Ascending aorta (tissue), 2 donors: ENCODE measurements at regions of chr17 and their contacts with region 1.

Region 1: GRCh38 chr17:39952680-39953470 is 9.9 kb upstream of the GSDMA start:
- DNase-seq: peak; percentile 93 to 99
- H3K4me3 ChIP-seq: peak overlapping the region; percentile 45 to 58
- H3K27ac ChIP-seq: peak overlapping the region; percentile 46 to 53
- H3K4me1 ChIP-seq: peaks cover 2 to 10% of the 10 kb centered on the region in 2 donors
- H3K27me3 ChIP-seq: no peaks in the 10 kb centered on the region
- CTCF ChIP-seq: no peak

Region 2: DNA sequence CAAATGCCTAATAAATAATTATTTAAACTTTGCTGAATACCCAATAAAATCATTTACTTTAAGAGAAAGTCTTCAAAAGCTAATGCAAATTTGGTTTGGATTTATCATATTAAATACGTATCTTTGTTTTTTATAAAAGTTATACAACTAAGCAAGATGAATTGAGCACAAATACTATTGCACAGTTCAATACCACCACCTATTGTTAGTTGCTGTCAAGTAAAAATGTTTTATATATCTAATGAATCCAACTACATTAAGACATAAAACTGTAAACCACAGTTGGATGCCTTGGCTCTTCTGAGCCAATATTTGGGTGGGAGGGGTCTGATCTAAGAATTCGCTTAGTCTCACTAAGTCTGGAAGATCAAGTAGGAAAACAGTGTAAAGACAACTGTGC is 559.1 kb before region 1 on chr17:
- intact Hi-C with region 1: no loop called
- DNase-seq: no peak
- H3K4me3 ChIP-seq: peak overlapping the region in 1 of 2 donors; percentile 38
- H3K27ac ChIP-seq: peak overlapping the region; percentile 18 to 68
- H3K4me1 ChIP-seq: peaks cover 0 to 19% of the 10 kb centered on the region in 2 donors
- H3K27me3 ChIP-seq: no peaks in the 10 kb centered on the region
- CTCF ChIP-seq: peak; percentile 24 to 44 (median 28)

Region 3: DNA sequence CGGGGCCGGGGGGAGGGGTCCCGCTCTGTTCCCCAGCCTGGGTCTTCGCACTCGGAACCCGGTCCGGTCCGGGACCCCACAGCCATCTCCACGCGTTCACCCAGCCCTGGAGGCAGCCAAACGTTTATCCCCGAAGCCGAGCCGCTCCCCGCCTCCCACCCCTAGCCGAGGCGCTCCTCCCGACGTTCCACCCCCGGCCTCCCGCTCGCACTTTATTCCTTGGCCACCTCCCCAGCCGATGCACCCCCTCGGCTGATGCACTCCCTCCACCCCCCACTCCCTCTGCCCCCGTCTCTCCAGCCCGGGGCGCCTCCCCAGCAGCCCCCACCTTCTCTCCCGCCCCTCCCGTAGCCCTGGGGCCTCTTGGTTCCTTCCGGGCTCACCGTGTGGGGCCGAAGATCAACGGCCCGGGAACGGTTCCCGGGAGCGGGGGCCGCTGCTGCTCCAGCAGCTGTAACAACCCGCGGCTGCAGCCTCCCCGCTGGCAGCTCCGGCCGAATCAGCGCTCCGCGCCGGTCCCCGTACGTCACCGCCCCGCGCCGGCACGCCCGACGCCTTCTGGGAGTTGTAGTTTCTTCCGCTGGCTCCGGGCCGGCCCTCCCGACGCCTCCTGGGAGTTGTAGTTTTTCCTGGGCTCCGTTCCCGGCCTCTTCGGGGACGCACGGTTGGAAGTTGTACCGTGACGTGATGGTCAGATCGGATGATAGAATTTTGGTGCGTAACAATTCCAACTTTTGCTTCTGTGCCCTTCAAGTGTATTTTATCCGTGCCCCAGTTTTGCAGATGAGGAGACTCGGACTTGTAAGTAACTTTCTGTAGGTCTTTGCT is 25.6 kb before region 1 on chr17 and contains the starts of genes LRRC3C and ORMDL3:
- intact Hi-C with region 1: loop called (anchors 1 kb)
- DNase-seq: peak; percentile 67 to 95
- H3K4me3 ChIP-seq: peak within 1 kb of the TSS; percentile 95 to 100
- H3K27ac ChIP-seq: peak within 1 kb of the TSS; percentile 98 to 99
- H3K4me1 ChIP-seq: peaks cover 14 to 32% of the 10 kb centered on the region in 2 donors
- H3K27me3 ChIP-seq: no peaks in the 10 kb centered on the region
- CTCF ChIP-seq: no peak
- total RNA-seq, gene LRRC3C: not detected
- total RNA-seq, gene ORMDL3: 32.2 TPM

Region 4: GRCh38 chr17:39980351-39981206 is 27.7 kb after region 1 on chr17 and contains the start of gene PSMD3:
- intact Hi-C with region 1: loop called (anchors 1 kb)
- DNase-seq: peak; percentile 98 to 100
- H3K4me3 ChIP-seq: peak within 1 kb of the TSS; percentile 88 to 99
- H3K27ac ChIP-seq: peak within 1 kb of the TSS; percentile 85 to 93
- H3K4me1 ChIP-seq: peaks cover 9 to 15% of the 10 kb centered on the region in 2 donors
- H3K27me3 ChIP-seq: no peaks in the 10 kb centered on the region
- CTCF ChIP-seq: peak; percentile 75 to 94 (median 81)
- total RNA-seq, gene PSMD3: 93.1 TPM

Region 5: GRCh38 chr17:40098846-40099618 is 146.2 kb after region 1 on chr17:
- intact Hi-C with region 1: loop called (anchors 1 kb)
- DNase-seq: peak; percentile 99 to 100
- H3K4me3 ChIP-seq: peak overlapping the region; percentile 89 to 94
- H3K27ac ChIP-seq: peak overlapping the region; percentile 91 to 99
- H3K4me1 ChIP-seq: peaks cover 35 to 70% of the 10 kb centered on the region in 2 donors
- H3K27me3 ChIP-seq: no peaks in the 10 kb centered on the region
- CTCF ChIP-seq: no peak

Region 6: DNA sequence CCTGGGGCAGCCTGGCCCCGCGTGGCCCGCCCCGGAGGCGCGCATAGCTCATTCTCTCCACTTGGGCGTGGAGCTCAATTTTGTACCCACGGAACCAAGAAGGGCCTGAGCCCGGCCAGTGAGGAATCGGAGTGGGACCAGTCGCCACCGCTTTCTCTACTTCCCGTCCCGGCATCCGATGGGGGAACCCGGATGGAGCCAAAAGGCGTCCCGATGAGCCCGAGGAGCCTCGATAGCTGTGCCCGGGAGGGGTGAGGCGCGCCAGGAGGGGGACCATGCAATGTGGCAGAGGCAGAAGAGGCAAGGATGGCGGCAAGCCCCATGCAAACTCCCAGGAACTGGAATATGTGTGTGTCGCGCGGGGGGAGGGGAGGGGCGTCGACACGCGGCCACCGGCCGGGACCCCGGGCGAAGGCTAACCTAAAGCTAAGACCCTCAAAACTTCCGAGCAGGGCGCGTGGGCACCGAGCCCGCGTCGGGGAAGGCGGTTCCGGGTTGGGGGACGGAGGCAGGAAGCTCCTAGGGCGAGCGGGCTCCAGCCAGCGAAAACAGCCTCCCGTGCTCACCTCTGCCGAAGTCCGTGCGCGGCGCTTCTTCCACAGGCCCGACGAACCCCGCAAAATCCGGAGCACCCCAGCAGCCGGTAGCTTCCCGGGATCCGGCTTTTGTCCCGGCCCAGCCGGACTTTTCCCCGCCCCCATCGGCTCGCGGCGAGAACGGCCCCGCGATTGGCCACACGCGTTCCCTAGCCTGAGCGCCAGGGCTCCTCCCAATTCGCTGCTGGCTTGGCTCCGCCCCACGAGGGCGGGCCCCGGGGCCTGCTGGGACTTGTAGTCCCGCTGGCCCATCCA is 1965.7 kb after region 1 on chr17 and contains the start of gene ACLY:
- intact Hi-C with region 1: loop called (anchors 2 kb)
- DNase-seq: peak; percentile 91 to 98
- H3K4me3 ChIP-seq: peak within 1 kb of the TSS; percentile 82 to 85
- H3K27ac ChIP-seq: peak within 1 kb of the TSS; percentile 78 to 87
- H3K4me1 ChIP-seq: peaks cover 2 to 22% of the 10 kb centered on the region in 2 donors
- H3K27me3 ChIP-seq: no peaks in the 10 kb centered on the region
- CTCF ChIP-seq: no peak
- total RNA-seq, gene ACLY: 64.4 TPM